WTC11 (cell line): ENCODE measurements at regions of chr4 and their contacts with region 1.

Region 1: DNA sequence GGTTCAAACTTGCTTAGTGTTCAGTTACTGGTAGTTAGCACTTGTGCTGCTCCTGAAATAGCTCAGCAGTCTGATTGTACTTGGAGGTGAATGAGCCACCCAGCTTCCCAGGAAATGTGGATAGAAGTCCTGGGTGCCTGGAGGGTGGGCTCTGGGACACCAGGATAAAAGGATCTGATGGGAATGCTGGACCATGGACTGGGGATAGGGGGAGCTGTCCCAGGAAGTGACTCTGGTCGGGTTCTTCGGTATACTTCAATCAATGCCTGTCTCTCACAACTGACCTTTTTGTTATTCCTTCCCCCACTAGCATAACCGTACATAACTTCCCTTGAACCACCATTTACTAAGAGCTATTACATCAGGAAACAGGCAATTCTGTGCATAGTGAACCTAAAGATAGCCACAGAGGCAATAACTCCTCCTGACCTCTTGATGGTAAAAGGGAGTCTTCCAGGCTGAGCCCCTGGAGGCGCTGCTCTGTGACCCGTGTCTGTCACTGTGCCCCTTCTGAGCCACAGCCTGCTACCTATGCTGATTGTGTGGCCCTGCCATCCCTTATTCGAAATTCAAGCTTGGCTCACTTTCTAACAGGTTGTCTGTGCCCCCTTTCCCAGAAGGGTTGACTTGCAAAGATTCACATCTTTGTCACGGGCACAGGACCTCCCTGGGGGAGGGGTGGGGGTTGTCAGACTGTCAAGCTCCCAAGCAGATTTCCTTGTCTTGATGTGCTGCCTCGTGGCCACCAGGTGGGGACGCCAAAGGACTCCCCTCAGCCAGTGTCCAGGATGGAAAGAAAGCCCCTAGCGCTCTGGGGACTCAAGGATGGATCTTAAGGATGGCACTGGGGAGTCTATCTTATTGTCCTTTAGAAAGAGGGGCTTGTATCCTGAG is 24.5 kb upstream of the WDR1 start:
- DNase-seq: peak; percentile 59
- ATAC-seq: peak; percentile 93
- H3K4me3 Mint-ChIP-seq: no peak overlapping the region
- H3K27ac Mint-ChIP-seq: no peak overlapping the region
- H3K4me1 Mint-ChIP-seq: peaks cover 5% of the 10 kb centered on the region
- H3K27me3 Mint-ChIP-seq: 0 out of 2 replicates have a peak, but pooled peaks cover 3% of the 10 kb centered on the region
- CTCF ChIP-seq: no peak

Region 2: DNA sequence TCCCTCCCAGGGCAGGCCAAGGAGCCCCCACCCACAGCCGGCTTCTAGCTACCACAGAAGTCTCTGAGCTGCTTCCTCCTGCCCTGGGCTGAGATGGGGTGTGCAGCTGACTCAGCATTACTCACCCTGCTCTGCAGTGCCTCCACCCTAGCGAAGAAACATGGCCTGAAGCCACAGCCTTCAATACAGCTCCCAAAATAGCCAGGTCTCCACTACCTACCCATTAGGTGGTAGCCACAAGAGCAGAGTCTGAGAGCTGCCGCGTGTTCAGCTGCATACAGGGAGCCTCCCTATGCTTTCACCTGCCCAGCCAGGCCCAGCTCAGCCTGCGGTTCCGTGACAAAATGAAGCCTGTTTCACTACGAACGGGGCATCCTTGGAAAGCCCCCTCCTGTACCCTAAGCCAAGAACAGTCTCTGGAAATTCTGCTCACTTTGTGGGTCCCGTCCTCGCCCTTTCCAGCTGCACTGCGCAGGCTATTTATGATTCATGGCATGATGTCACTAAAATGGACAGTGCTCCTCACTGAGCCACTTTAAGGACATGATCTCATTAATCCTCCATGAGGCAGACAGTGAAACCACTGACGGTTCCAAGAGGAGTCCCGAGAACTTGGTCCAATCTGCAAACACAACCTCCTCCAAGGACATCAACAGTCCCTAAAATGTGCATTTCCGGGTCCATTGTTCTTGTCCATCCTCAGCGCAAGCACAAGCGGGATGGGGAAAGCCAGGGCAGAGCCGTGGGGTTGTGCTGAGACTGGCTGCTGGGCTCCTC is 44.7 kb before region 1 on chr4:
- CTCF ChIA-PET with region 1: no interaction called
- POLR2A ChIA-PET with region 1: no interaction called
- DNase-seq: no peak
- ATAC-seq: no peak
- H3K4me3 Mint-ChIP-seq: no peak overlapping the region
- H3K27ac Mint-ChIP-seq: no peak overlapping the region
- H3K4me1 Mint-ChIP-seq: peaks cover 33% of the 10 kb centered on the region
- H3K27me3 Mint-ChIP-seq: no peaks in the 10 kb centered on the region
- CTCF ChIP-seq: no peak

Region 3: GRCh38 chr4:10116580-10117358 is 24.3 kb before region 1 on chr4 and contains the start of gene WDR1:
- CTCF ChIA-PET with region 1: interaction called, 42 read pairs
- POLR2A ChIA-PET with region 1: interaction called, 3 read pairs
- DNase-seq: peak; percentile 95
- ATAC-seq: peak; percentile 84
- H3K4me3 Mint-ChIP-seq: peak within 1 kb of the TSS; percentile 85
- H3K27ac Mint-ChIP-seq: peak within 1 kb of the TSS; percentile 97
- H3K4me1 Mint-ChIP-seq: peaks cover 66% of the 10 kb centered on the region
- H3K27me3 Mint-ChIP-seq: no peaks in the 10 kb centered on the region
- CTCF ChIP-seq: no peak
- total RNA-seq, gene WDR1: 288 to 306 TPM (median 288 TPM) in 3 replicates

Region 4: DNA sequence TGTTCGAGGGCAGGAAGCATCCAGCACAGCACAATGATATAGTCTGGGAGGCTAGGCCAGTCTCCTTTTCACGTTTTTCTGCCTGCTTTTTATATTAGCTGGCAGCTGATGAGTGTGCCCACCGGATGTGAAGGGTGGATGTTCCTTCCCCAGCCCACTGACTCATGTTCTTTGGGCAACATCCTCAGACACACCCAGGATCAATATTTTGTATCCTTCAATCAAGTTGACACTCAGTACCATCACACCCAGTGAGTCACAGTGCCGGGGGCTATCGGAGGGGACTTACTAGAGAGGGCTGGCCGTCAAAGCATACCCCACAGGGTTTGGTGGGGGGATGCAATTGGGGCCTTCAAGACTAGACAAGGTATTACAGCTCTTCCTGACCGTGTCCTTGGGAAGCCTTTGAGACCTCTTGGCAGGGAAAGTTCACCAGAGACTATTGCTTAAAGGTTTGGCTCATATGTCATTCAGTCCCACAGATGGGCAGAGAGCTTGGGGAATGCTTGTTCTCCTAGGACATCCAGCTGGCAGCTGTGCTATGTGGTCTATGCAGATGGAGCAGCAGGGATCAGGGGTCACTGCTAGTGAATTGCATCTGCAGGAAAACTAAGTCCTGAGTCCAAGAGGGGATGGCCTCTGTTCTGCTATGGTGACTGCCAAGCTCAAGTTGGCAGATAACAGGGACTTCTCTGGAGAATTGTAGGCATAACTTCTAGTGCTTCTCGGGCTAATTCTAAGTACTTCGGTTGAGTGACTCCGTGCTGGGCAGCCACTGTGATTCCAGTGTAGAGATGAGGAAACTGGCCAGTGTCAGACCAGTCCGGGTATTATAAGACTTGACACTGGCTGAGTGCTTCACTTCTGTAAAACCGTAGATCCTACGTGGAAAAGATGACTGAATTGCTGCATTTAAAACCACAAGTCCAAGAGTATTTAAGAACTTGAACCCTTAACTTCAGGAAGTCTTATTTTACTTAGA is 11.6 kb before region 1 on chr4:
- CTCF ChIA-PET with region 1: interaction called, 13 read pairs
- POLR2A ChIA-PET with region 1: no interaction called
- DNase-seq: no peak
- ATAC-seq: no peak
- H3K4me3 Mint-ChIP-seq: no peak overlapping the region
- H3K27ac Mint-ChIP-seq: no peak overlapping the region
- H3K4me1 Mint-ChIP-seq: no peaks in the 10 kb centered on the region
- H3K27me3 Mint-ChIP-seq: peaks cover 4% of the 10 kb centered on the region; the same call in 1 of the 2 replicates
- CTCF ChIP-seq: no peak

Region 5: DNA sequence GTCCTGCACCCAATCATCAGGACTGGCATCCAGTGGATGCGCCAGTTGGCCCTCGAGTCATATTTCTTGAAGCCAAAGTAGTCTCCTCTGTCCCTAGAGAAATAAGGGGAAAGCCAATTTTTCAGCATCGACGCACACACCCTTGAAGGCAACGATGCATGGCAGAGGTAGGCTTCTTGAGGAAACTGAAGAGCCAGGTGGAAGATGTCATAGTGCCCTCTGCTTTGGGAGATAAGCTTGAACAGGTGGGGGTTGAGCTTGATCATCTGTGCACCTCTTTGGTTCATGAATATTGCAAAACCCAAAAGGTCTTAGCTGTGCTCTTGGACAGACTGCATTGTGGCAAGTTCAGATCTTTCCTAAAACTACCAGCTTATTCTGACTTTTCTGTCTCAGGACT is 10.1 kb after region 1 on chr4:
- CTCF ChIA-PET with region 1: interaction called, 16 read pairs
- POLR2A ChIA-PET with region 1: no interaction called
- DNase-seq: no peak
- ATAC-seq: no peak
- H3K4me3 Mint-ChIP-seq: no peak overlapping the region
- H3K27ac Mint-ChIP-seq: no peak overlapping the region
- H3K4me1 Mint-ChIP-seq: no peaks in the 10 kb centered on the region
- H3K27me3 Mint-ChIP-seq: peaks cover 12% of the 10 kb centered on the region
- CTCF ChIP-seq: no peak

Region 6: GRCh38 chr4:10239982-10240654 is 99.0 kb after region 1 on chr4:
- CTCF ChIA-PET with region 1: no interaction called
- POLR2A ChIA-PET with region 1: no interaction called
- DNase-seq: no peak
- ATAC-seq: no peak
- H3K4me3 Mint-ChIP-seq: no peak overlapping the region
- H3K27ac Mint-ChIP-seq: no peak overlapping the region
- H3K4me1 Mint-ChIP-seq: no peaks in the 10 kb centered on the region
- H3K27me3 Mint-ChIP-seq: peaks cover 27% of the 10 kb centered on the region
- CTCF ChIP-seq: no peak